ENCODE measurements at regions of chr17 and their contacts with region 1.

Region 1: DNA sequence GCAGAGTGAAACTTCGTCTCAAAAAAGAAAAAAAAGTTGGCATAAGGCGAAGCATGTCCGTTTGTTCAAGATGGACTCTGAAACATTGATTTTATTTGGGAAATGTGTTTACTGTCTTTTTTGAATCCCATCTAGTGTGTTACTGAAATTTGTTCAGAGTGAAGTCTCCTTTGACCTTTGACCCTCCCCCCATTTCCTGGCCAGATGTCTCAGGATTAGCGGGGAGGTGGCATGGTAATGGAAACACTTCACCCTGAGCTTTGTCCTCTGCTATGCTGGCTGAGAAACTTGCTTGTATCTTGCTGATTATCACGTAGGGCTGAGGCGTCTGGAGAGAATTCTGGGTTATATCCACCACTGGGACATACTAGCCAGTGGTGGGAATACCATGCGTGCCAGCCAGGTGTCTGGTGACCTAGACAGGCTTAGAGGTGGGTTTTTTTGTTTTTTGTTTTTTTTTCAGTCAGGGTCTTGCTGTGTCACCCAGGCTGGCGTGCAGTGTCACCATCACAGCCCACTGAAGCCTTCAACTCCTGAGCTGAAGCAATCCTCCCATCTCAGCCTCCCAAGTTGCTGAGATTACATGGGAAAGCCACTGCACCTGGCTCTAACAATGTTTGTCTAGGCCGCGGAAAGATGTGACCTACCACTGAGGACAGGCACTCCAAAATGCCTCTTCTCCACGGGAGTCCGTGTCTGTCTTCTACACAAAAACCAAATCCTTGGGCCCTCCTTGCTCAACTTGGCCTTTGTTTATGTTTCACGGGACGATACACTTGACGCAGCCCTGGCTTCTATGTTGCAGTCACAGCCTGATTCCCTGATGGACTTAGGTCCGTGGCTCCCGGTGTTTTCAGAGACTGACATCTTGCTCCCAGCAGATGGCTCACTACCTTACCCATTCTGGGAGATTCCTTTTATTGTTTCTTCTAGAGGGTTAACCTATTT is 6.6 kb upstream of the GALK1 start:
- DNase-seq: no peak
- H3K4me3 ChIP-seq: no peak overlapping the region
- H3K27ac ChIP-seq: no peak overlapping the region
- H3K4me1 ChIP-seq: peaks cover 2% of the 10 kb centered on the region
- H3K27me3 ChIP-seq: no peaks in the 10 kb centered on the region
- CTCF ChIP-seq: peak; percentile 20 to 39

Region 2: GRCh38 chr17:75822119-75822799 is 50.7 kb after region 1 on chr17:
- CTCF ChIA-PET with region 1: interaction called, 3 read pairs
- dilution Hi-C with region 1: no loop called
- in situ Hi-C with region 1: no loop called
- intact Hi-C with region 1: loop called (anchors 2 kb)
- DNase-seq: no peak
- H3K4me3 ChIP-seq: no peak overlapping the region
- H3K27ac ChIP-seq: no peak overlapping the region
- H3K4me1 ChIP-seq: no peaks in the 10 kb centered on the region
- H3K27me3 ChIP-seq: no peaks in the 10 kb centered on the region
- CTCF ChIP-seq: no peak

Region 3: DNA sequence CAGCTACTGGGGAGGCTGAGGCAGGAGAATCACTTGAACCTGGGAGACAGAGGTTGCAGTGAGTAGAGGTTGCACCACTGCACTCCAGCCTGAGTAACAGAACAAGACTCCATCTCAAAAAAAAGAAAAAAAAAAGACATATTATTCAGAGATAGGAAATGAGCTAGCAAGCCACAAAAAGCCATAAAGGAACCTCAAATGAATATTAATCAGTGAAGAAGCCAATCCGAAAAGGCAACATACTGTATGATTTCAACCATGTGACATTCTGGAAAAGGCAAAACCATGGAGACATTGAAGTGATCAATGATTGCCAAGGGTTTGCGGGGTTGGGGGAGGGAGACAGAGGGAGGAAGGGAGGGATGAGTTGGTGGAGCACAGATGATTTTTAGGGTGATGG is 340.3 kb after region 1 on chr17:
- CTCF ChIA-PET with region 1: no interaction called
- dilution Hi-C with region 1: no loop called
- in situ Hi-C with region 1: no loop called
- intact Hi-C with region 1: no loop called
- DNase-seq: no peak
- H3K4me3 ChIP-seq: no peak overlapping the region
- H3K27ac ChIP-seq: no peak overlapping the region
- H3K4me1 ChIP-seq: no peaks in the 10 kb centered on the region
- H3K27me3 ChIP-seq: no peaks in the 10 kb centered on the region
- CTCF ChIP-seq: no peak

Region 4: DNA sequence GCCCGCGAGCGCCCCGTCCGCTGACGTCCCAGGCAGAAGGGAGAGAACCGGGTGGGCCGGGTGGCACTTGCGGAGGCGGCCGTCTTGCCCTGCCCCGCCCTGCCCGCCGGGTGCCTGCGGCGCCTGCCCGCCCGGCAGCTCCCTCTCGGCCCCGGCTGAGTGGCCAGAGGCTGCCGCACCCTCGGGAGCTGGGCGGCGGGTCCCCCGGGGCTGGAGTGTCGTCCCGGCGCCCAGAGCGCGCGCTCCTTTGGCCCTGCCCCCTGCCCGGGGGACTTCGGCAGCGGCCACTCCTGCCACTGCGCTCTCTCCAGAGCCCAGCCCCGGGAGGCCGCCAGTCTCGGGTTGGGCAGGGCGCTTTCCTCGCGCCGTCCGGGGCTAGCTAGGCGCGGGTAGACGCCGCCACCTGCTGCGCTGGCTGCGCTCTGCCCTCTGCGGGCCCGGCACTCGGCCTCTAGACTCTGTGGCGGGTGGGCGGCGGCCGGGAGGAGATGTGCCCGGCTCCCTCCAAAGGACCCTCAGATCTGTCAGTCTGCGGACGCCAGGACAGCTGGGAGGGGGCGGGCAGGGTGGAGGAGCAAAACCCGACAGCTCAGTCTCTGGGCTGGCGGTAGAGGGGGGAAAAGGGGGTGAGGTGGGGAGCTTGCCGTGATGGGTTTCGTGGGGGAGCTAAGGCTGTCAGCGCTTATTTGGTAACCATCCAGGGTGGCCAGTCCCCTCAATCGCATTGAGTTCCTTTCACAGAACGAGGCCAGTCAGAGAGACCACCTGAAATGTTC is 814.4 kb after region 1 on chr17 and contains the start of gene ST6GALNAC2:
- CTCF ChIA-PET with region 1: no interaction called
- dilution Hi-C with region 1: no loop called
- in situ Hi-C with region 1: no loop called
- intact Hi-C with region 1: no loop called
- DNase-seq: peak; percentile 89
- H3K4me3 ChIP-seq: peak within 1 kb of the TSS; percentile 86 to 93 (median 92)
- H3K27ac ChIP-seq: peak within 1 kb of the TSS; percentile 93
- H3K4me1 ChIP-seq: peaks cover 39% of the 10 kb centered on the region
- H3K27me3 ChIP-seq: no peaks in the 10 kb centered on the region
- CTCF ChIP-seq: peak; percentile 17 to 64
- total RNA-seq, gene ST6GALNAC2: 65.1 to 221 TPM